Naive thymus-derived CD4-positive, alpha-beta T cell (primary cell): ENCODE measurements at regions of chr12 and their contacts with region 1.

Region 1: GRCh38 chr12:94980577-94980976 is 22.9 kb downstream of the NDUFA12 start:
- DNase-seq: peak in 7 of 9 donors; percentile 20 to 73 (median 60)
- ATAC-seq: peak; percentile 76
- H3K4me3 ChIP-seq: no peak overlapping the region
- H3K4me3 Mint-ChIP-seq: peak overlapping the region in 9 of 10 donors; percentile 24 to 73 (median 59)
- H3K27ac ChIP-seq: no peak overlapping the region
- H3K27ac Mint-ChIP-seq: peak overlapping the region in 8 of 9 donors; percentile 30 to 86 (median 72)
- H3K4me1 ChIP-seq: peaks cover 0 to 32% of the 10 kb centered on the region in 2 donors
- H3K4me1 Mint-ChIP-seq: peaks cover 22 to 88% (median 67%) of the 10 kb centered on the region in 7 donors
- H3K27me3 ChIP-seq: no peaks in the 10 kb centered on the region
- H3K27me3 Mint-ChIP-seq: no peaks in the 10 kb centered on the region

Region 2: GRCh38 chr12:94262228-94263010 is 718.2 kb before region 1 on chr12:
- CTCF ChIA-PET with region 1: no interaction called
- POLR2A ChIA-PET with region 1: no interaction called
- intact Hi-C with region 1: loop called in 1 of 2 experiments (anchors 5 kb)
- DNase-seq: peak; percentile 50 to 81 (median 72)
- ATAC-seq: peak; percentile 89
- H3K4me3 ChIP-seq: peak overlapping the region; percentile 94
- H3K4me3 Mint-ChIP-seq: peak overlapping the region; percentile 80 to 99 (median 97)
- H3K27ac ChIP-seq: peak overlapping the region; percentile 91
- H3K27ac Mint-ChIP-seq: peak overlapping the region; percentile 91 to 100 (median 99)
- H3K4me1 ChIP-seq: peaks cover 15 to 18% of the 10 kb centered on the region in 2 donors
- H3K4me1 Mint-ChIP-seq: peaks cover 23 to 52% (median 46%) of the 10 kb centered on the region in 7 donors
- H3K27me3 ChIP-seq: no peaks in the 10 kb centered on the region
- H3K27me3 Mint-ChIP-seq: no peaks in the 10 kb centered on the region

Region 3: DNA sequence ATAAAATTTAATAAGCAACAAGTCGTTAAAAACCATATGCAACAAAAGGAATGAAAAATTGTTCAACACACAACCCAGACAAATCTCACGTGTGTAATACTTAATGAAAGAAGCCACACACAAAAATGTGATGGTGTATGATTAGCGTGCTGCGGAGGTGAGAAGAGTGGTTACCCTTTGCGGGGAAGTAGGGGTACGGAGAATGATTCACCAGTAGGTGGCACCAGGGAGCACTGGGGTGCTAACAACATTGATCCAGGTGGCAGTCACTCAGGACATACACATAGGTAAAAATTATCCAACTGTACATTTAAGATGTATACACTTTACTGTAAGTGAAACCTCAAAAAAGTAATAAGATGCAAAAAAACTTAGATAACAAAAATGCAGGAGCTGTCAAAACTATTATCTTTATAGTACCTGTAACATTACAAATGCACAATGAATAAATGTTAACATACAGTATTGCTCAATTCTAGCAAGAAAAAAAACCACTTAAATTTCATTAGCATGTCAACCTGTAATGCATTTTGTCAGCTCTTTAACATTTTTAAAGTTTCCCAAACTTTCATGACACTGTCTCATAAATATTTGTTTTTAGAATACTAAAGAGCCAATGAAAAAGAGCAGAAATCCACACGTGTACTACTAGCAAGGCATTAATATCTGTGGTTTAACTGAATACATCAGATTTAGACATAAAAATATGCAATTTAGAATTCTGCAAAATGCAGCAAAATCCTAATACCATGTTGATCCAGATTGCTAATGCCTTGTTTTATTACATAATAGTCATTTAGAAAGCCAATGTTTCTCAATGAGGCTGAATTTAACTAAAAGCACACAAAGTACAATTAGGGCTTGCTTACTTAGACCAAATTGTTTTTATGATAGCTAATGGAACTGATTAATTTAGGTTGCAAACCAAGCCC is 376.9 kb before region 1 on chr12:
- CTCF ChIA-PET with region 1: interaction called, 6 read pairs
- POLR2A ChIA-PET with region 1: no interaction called
- intact Hi-C with region 1: loop called (anchors 1 kb)
- DNase-seq: peak in 7 of 9 donors; percentile 16 to 58 (median 37)
- ATAC-seq: peak; percentile 80
- H3K4me3 ChIP-seq: no peak overlapping the region
- H3K4me3 Mint-ChIP-seq: no peak overlapping the region
- H3K27ac ChIP-seq: no peak overlapping the region
- H3K27ac Mint-ChIP-seq: no peak overlapping the region
- H3K4me1 ChIP-seq: no peaks in the 10 kb centered on the region
- H3K4me1 Mint-ChIP-seq: peaks cover 0 to 7% (median 0%) of the 10 kb centered on the region in 7 donors
- H3K27me3 ChIP-seq: no peaks in the 10 kb centered on the region
- H3K27me3 Mint-ChIP-seq: peaks cover 3 to 41% (median 8%) of the 10 kb centered on the region in 5 donors

Region 4: DNA sequence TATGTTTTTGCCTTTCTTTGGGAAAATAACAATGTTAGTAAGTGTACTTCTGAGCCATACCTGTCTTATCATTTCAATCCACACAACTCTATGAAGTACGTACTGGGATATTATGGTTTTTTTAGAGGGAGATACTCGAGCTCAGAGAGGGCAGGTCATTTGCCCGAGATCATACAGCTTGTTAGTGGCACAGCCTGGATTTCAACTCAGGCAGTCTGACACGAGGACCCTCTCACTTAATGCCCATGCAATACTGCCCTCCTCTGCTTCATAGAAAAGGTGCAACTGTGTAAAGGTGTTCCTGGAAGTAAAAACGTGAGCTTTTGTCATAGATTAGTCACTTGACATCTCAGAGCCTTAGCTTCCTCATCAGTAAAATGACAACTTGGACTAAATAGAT is 105.1 kb before region 1 on chr12:
- CTCF ChIA-PET with region 1: no interaction called
- POLR2A ChIA-PET with region 1: no interaction called
- intact Hi-C with region 1: loop called in 1 of 2 experiments (anchors 10 kb)
- DNase-seq: peak in 3 of 9 donors; percentile 2 to 29 (median 18)
- ATAC-seq: peak; percentile 40
- H3K4me3 ChIP-seq: no peak overlapping the region
- H3K4me3 Mint-ChIP-seq: peak overlapping the region in 6 of 10 donors; percentile 8 to 87 (median 24)
- H3K27ac ChIP-seq: no peak overlapping the region
- H3K27ac Mint-ChIP-seq: no peak overlapping the region
- H3K4me1 ChIP-seq: no peaks in the 10 kb centered on the region
- H3K4me1 Mint-ChIP-seq: peaks cover 0 to 24% (median 22%) of the 10 kb centered on the region in 7 donors
- H3K27me3 ChIP-seq: peaks cover 9 to 10% of the 10 kb centered on the region in 2 donors
- H3K27me3 Mint-ChIP-seq: peaks cover 53 to 80% (median 73%) of the 10 kb centered on the region in 5 donors

Region 5: GRCh38 chr12:96501139-96501761 is 1520.7 kb after region 1 on chr12:
- CTCF ChIA-PET with region 1: no interaction called
- POLR2A ChIA-PET with region 1: no interaction called
- intact Hi-C with region 1: loop called in 1 of 2 experiments (anchors 10 kb)
- DNase-seq: peak in 1 of 9 donors; percentile 29
- ATAC-seq: peak; percentile 80
- H3K4me3 ChIP-seq: no peak overlapping the region
- H3K4me3 Mint-ChIP-seq: peak overlapping the region in 9 of 10 donors; percentile 18 to 66 (median 48)
- H3K27ac ChIP-seq: no peak overlapping the region
- H3K27ac Mint-ChIP-seq: peak overlapping the region; percentile 28 to 89 (median 63)
- H3K4me1 ChIP-seq: peaks cover 22 to 35% of the 10 kb centered on the region in 2 donors
- H3K4me1 Mint-ChIP-seq: peaks cover 29 to 60% (median 42%) of the 10 kb centered on the region in 7 donors
- H3K27me3 ChIP-seq: no peaks in the 10 kb centered on the region
- H3K27me3 Mint-ChIP-seq: no peaks in the 10 kb centered on the region

Region 6: GRCh38 chr12:96587691-96588090 is 1607.1 kb after region 1 on chr12:
- CTCF ChIA-PET with region 1: no interaction called
- POLR2A ChIA-PET with region 1: no interaction called
- intact Hi-C with region 1: no loop called
- DNase-seq: no peak
- ATAC-seq: no peak
- H3K4me3 ChIP-seq: no peak overlapping the region
- H3K4me3 Mint-ChIP-seq: no peak overlapping the region
- H3K27ac ChIP-seq: no peak overlapping the region
- H3K27ac Mint-ChIP-seq: no peak overlapping the region
- H3K4me1 ChIP-seq: no peaks in the 10 kb centered on the region
- H3K4me1 Mint-ChIP-seq: no peaks in the 10 kb centered on the region
- H3K27me3 ChIP-seq: no peaks in the 10 kb centered on the region
- H3K27me3 Mint-ChIP-seq: peaks cover 0 to 29% (median 12%) of the 10 kb centered on the region in 5 donors